IMR-90 (cell line): ENCODE measurements at regions of chr6 and their contacts with region 1.

Region 1: GRCh38 chr6:100719883-100720682 is 161.0 kb downstream of the ASCC3 start:
- DNase-seq: peak; percentile 41
- ATAC-seq: peak; percentile 78
- H3K4me3 ChIP-seq: no peak overlapping the region
- H3K27ac ChIP-seq: no peak overlapping the region
- H3K4me1 ChIP-seq: no peaks in the 10 kb centered on the region
- H3K27me3 ChIP-seq: no peaks in the 10 kb centered on the region
- CTCF ChIP-seq: peak; percentile 46
- POLR2A ChIP-seq: no peak
- RAD21 ChIP-seq: peak; percentile 32; the same call in 1 of the 2 replicates

Region 2: DNA sequence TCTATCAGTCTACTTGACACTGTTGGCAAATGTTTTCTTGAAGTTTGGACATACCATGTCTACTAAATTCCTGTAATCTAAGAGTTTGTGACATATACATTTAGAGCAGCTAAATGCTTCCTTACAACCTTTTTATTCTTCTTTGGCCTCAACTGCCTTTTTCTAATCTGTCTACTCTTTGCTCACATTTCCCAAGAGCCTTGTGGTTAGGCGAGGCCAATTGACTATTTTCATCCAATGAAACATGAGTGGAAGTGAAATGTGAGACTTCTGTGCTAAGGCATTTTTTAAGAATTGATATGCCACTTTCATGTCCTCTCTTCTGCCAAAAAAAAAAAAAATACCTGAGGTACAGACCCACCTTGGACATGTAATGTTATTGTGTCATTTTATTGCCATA is 567.9 kb before region 1 on chr6:
- CTCF ChIA-PET with region 1: no interaction called
- POLR2A ChIA-PET with region 1: no interaction called
- dilution Hi-C with region 1: no loop called
- in situ Hi-C with region 1: no loop called
- intact Hi-C with region 1: no loop called
- DNase-seq: no peak
- ATAC-seq: no peak
- H3K4me3 ChIP-seq: no peak overlapping the region
- H3K27ac ChIP-seq: no peak overlapping the region
- H3K4me1 ChIP-seq: no peaks in the 10 kb centered on the region
- H3K27me3 ChIP-seq: peaks cover 16% of the 10 kb centered on the region
- CTCF ChIP-seq: no peak
- POLR2A ChIP-seq: no peak
- RAD21 ChIP-seq: no peak

Region 3: DNA sequence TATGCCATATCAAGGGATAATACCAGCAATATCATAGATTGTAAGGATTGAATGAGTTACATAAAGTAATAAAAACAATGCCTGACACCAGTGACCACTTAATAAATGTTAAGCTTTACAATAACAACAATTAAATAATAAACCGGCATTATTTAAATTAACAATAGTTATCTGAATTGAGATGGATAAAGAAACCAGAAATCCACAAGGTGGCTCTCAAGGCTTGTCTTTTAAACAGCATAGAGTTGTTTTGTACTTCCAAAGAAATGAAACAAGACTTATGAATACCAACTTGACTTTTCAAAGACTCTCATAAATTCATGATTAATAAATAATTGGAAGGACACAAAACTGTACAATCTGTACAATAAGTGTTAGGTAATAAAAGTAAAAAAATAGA is 42.1 kb before region 1 on chr6:
- CTCF ChIA-PET with region 1: interaction called, 3 read pairs
- POLR2A ChIA-PET with region 1: no interaction called
- dilution Hi-C with region 1: no loop called
- in situ Hi-C with region 1: no loop called
- intact Hi-C with region 1: loop called (anchors 5 kb)
- DNase-seq: peak; percentile 28
- ATAC-seq: no peak
- H3K4me3 ChIP-seq: no peak overlapping the region
- H3K27ac ChIP-seq: no peak overlapping the region
- H3K4me1 ChIP-seq: no peaks in the 10 kb centered on the region
- H3K27me3 ChIP-seq: no peaks in the 10 kb centered on the region
- CTCF ChIP-seq: peak; percentile 37; the same call in 1 of the 2 replicates
- POLR2A ChIP-seq: no peak
- RAD21 ChIP-seq: peak; percentile 23; the same call in 1 of the 2 replicates